Activated B cell treated with CpG ODN at 0.5 μM for 24 hours (primary cell): ENCODE measurements at regions of chr7 and their contacts with region 1.

Region 1: GRCh38 chr7:38369816-38370493 is 96.5 kb upstream of the TARP start:
- DNase-seq: peak; percentile 53
- ATAC-seq: peak; percentile 84
- H3K4me3 Mint-ChIP-seq: no peak overlapping the region
- H3K27ac Mint-ChIP-seq: no peak overlapping the region
- H3K4me1 Mint-ChIP-seq: peaks cover 25% of the 10 kb centered on the region
- H3K27me3 Mint-ChIP-seq: no peaks in the 10 kb centered on the region
- CTCF ChIP-seq: peak; percentile 75

Region 2: GRCh38 chr7:38215735-38216670 is 154.0 kb before region 1 on chr7:
- CTCF ChIA-PET with region 1: interaction called, 46 read pairs
- POLR2A ChIA-PET with region 1: no interaction called
- intact Hi-C with region 1: loop called (anchors 1 kb)
- DNase-seq: peak; percentile 40
- ATAC-seq: peak; percentile 97
- H3K4me3 Mint-ChIP-seq: no peak overlapping the region
- H3K27ac Mint-ChIP-seq: no peak overlapping the region
- H3K4me1 Mint-ChIP-seq: peaks cover 7% of the 10 kb centered on the region
- H3K27me3 Mint-ChIP-seq: no peaks in the 10 kb centered on the region
- CTCF ChIP-seq: peak; percentile 75

Region 3: DNA sequence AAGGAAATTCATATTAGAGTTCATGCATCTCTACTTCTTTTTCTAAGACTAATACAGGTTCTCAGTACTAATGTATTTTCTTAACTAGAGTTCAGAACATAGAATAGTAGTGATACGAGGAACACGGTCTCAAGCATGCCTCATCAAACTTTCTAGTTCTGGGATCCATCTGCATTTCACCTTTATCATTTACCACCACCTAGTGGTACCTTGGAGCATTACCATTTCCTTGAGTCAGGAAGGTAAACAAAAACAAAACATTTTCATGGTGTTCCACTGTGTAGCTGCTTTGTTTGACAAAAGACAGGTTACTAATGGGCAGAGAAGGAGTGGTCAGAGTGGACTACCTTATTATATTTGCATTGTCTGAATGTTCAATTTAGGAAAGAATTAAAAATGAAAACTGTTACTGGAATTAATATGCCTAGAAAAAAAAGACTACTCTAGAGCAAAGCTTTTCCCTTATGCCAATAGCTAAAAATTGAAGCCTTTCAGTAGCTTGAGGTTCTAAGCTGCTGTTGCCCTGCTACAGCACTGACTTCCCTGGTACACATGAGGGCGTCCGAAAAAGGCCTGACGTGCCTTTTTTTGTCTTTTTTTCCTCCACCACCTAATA is 147.4 kb before region 1 on chr7:
- CTCF ChIA-PET with region 1: interaction called, 46 read pairs
- POLR2A ChIA-PET with region 1: no interaction called
- intact Hi-C with region 1: loop called (anchors 1 kb)
- DNase-seq: no peak
- ATAC-seq: peak; percentile 67
- H3K4me3 Mint-ChIP-seq: no peak overlapping the region
- H3K27ac Mint-ChIP-seq: no peak overlapping the region
- H3K4me1 Mint-ChIP-seq: no peaks in the 10 kb centered on the region
- H3K27me3 Mint-ChIP-seq: no peaks in the 10 kb centered on the region
- CTCF ChIP-seq: peak; percentile 76

Region 4: GRCh38 chr7:38335492-38336147 is 34.3 kb before region 1 on chr7:
- CTCF ChIA-PET with region 1: interaction called, 32 read pairs
- POLR2A ChIA-PET with region 1: no interaction called
- intact Hi-C with region 1: loop called (anchors 1 kb)
- DNase-seq: peak; percentile 67
- ATAC-seq: peak; percentile 99
- H3K4me3 Mint-ChIP-seq: peak overlapping the region; percentile 28
- H3K27ac Mint-ChIP-seq: peak overlapping the region; percentile 30
- H3K4me1 Mint-ChIP-seq: peaks cover 15% of the 10 kb centered on the region
- H3K27me3 Mint-ChIP-seq: no peaks in the 10 kb centered on the region
- CTCF ChIP-seq: peak; percentile 45

Region 5: GRCh38 chr7:38383281-38383680 is 13.3 kb after region 1 on chr7:
- CTCF ChIA-PET with region 1: interaction called, 15 read pairs
- POLR2A ChIA-PET with region 1: no interaction called
- intact Hi-C with region 1: no loop called
- DNase-seq: no peak
- ATAC-seq: no peak
- H3K4me3 Mint-ChIP-seq: no peak overlapping the region
- H3K27ac Mint-ChIP-seq: no peak overlapping the region
- H3K4me1 Mint-ChIP-seq: no peaks in the 10 kb centered on the region
- H3K27me3 Mint-ChIP-seq: no peaks in the 10 kb centered on the region
- CTCF ChIP-seq: no peak

Region 6: DNA sequence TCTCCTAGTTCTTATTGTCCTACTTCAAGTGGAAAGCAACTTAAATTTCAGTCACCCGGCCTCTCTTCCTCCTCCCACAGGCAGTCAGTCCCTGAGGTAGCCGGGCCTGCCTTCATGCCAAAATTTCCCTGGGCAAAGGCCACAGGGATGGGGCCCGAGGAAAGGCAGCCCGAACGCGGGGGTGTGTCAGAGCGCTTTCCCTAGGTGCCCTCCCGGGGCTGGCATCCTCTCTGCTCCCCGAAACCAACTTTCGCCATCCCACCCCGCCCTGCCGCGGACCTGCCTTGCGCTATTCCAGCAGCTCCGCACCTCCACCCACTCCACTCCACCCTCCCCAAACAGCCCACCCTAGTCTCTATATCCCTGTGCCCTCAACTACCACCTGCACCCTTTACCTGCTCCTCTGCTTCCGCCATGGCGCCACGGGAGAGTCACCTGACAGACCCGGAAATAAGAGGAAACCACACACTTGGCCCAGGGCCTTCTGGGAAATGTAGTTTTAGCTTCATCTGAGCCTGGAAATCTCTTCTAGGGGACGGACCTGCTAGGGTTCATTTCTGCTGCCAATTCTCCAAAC is 538.9 kb after region 1 on chr7 and contains the start of gene VPS41:
- CTCF ChIA-PET with region 1: no interaction called
- POLR2A ChIA-PET with region 1: no interaction called
- intact Hi-C with region 1: loop called (anchors 10 kb)
- DNase-seq: peak; percentile 56
- ATAC-seq: peak; percentile 96
- H3K4me3 Mint-ChIP-seq: peak within 1 kb of the TSS; percentile 98
- H3K27ac Mint-ChIP-seq: peak within 1 kb of the TSS; percentile 94
- H3K4me1 Mint-ChIP-seq: peaks cover 52% of the 10 kb centered on the region
- H3K27me3 Mint-ChIP-seq: peaks cover 2% of the 10 kb centered on the region
- CTCF ChIP-seq: no peak
- total RNA-seq, gene VPS41: 78.5 and 91.8 TPM in 2 replicates